BJ (cell line): ENCODE measurements at regions of chr6 and their contacts with region 1.

Region 1: DNA sequence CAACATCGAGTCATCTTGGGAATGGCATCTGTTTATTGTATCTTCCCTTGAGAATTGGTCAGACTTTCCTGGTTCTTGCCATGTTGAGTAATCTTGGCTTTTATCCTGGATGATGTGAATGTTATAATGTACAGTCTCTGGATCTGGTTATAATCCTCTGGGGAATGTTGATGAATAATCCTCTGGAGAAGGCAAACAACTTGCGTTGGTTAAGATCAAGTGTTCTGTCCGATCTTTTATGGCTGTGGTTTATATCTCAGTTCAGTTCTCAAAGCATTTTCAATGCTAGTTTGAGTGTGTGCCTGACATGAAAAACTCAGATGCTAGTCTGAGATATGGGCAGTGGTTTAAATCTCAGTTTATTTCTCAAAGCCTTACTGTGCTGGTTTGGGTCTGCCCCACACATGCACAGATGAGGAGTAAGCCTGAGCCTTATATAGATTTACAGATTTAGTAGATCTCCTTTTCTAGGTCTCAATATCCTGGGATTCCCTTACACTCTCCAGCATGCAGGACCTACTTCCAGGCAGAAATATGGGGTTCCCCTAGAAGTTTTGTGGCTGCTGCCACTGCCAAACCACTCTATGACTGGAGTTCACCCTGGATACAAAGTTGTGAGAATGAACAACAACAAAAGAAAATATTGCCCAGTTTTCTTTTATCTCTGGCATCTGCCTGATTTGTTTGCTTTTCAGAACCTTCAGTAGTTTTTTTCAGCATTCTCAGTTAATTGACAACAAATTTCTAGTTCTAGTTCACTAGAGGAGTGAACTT is 191.8 kb upstream of the MAN1A1 start:
- DNase-seq: peak; percentile 100
- H3K4me3 ChIP-seq: no peak overlapping the region
- H3K27me3 ChIP-seq: peaks cover 2% of the 10 kb centered on the region; the same call in 1 of the 2 replicates
- CTCF ChIP-seq: no peak

Region 2: DNA sequence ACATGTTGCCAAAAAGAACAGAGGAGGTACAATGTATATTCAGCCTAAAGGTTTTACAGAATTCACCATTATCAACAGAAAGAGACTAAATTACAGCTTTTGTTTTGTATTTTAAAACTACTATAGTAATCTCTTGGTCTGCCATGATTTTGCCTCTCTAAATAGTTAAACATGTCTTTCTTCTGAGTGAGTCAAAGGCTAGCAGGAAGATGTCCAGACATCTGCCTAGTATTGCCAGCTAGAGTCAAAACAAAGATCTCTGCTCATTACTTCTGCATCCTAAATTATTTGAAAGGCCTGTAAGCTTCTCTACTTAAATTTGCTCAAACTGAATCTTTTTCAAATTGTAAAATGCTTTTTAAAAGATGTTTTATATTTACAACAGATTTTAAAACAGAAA is 638.6 kb before region 1 on chr6:
- CTCF ChIA-PET with region 1: no interaction called
- POLR2A ChIA-PET with region 1: no interaction called
- DNase-seq: no peak
- H3K4me3 ChIP-seq: no peak overlapping the region
- H3K27me3 ChIP-seq: no peaks in the 10 kb centered on the region
- CTCF ChIP-seq: no peak

Region 3: GRCh38 chr6:119350043-119350951 is 191.0 kb before region 1 on chr6:
- CTCF ChIA-PET with region 1: interaction called, 10 read pairs
- POLR2A ChIA-PET with region 1: no interaction called
- DNase-seq: no peak
- H3K4me3 ChIP-seq: peak overlapping the region; percentile 75
- H3K27me3 ChIP-seq: no peaks in the 10 kb centered on the region
- CTCF ChIP-seq: no peak

Region 4: DNA sequence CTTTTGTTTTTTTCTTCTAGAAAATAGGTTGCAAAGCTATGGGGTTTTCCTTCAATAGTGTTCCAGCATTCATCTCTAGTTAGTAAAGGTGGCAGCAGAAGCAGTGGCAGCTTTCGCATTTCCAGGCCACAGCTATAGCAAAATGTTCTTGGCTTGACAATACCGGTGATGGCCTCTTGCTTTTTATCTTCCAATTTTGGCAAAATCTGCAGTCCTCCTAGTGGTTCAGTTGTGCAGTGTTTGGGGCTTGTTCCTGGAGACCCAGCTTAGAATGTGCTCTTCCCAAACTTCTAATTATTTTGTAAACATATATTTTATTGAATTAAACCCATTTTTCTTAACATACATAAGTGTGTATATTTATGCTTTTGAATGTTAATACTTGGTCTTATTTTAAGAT is 178.8 kb after region 1 on chr6:
- CTCF ChIA-PET with region 1: no interaction called
- POLR2A ChIA-PET with region 1: no interaction called
- DNase-seq: no peak
- H3K4me3 ChIP-seq: no peak overlapping the region
- H3K27me3 ChIP-seq: no peaks in the 10 kb centered on the region
- CTCF ChIP-seq: no peak